A673 (cell line): ENCODE measurements at regions of chr20 and their contacts with region 1.

Region 1: GRCh38 chr20:32050851-32051556 is 1.0 kb upstream of the HCK start:
- DNase-seq: no peak
- H3K4me3 ChIP-seq: no peak overlapping the region
- H3K27ac ChIP-seq: no peak overlapping the region
- H3K4me1 ChIP-seq: peaks cover 4% of the 10 kb centered on the region
- H3K27me3 ChIP-seq: peaks cover 51% of the 10 kb centered on the region
- CTCF ChIP-seq: no peak

Region 2: DNA sequence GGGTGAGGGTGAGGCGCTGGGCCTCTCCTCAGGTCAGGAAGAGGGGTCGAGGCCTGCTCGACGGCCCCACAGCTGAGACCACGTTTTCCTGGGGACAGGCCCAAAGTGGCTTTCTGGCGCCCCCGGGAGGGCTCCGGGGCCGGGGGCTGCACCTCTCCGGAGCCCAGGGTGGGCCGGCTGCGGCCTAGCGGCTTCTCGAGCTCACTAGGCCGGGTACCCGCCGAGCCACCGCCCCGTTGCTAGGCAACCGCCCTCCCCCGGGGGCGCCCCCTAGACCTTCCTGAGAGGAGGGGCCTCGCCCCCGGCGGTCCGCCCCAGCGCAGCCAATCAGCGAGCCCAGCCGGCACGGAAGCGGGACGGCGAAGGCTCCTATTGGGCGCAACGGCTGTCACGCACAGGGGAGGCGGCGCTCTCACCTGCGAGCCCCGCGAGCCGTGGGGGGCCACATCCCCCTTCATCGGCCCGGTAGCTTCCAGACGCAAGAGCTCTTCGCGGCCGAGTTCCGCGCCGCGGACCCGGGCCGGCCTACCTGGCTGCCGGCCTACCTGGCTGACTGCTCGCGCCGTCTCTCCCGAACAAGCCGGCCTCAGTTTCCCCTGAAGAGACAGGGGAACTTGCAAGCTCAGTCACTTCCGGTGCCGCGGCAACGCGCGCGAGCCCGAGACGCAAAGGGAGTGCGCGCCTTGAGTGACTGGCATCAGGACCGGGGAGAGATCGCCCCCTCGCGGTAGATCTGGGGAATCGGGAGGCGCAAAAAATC is 327.5 kb before region 1 on chr20:
- CTCF ChIA-PET with region 1: no interaction called
- POLR2A ChIA-PET with region 1: no interaction called
- intact Hi-C with region 1: no loop called
- DNase-seq: peak; percentile 99
- H3K4me3 ChIP-seq: peak overlapping the region; percentile 66
- H3K27ac ChIP-seq: peak overlapping the region; percentile 89
- H3K4me1 ChIP-seq: peaks cover 31% of the 10 kb centered on the region
- H3K27me3 ChIP-seq: no peaks in the 10 kb centered on the region
- CTCF ChIP-seq: peak; percentile 95

Region 3: DNA sequence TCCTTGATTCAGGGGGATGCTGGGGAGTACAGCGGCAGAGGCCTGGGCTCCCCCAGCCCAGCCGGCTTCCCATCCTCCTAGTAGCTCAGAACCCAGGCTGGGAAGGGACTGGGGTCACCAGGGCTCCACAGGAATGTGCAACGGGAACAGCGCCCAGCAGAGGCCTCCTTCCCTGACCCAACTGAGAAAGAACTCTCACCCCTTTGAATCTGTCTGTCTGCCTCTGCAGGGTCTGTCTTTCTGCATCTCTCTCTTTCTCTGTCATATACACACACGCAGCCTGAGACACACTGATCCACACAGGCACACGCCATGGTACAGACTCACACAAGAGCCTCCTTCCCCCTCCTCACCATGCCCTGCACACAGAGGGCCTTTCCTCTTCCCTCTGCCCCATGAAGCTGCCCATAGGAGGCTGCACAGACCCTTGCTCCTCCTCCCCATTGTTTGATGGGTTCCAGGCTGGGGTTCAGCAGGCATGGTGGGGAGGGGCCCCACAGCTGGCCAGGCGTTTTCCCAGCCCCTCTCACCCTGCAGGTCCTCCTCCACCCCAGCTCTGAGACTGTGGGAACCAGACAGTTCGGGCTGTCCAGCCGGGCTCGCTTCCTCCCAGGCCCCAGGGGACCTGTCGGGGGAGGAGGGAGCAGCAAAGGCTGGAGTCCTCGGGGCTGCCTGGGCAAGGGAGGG is 208.4 kb before region 1 on chr20:
- CTCF ChIA-PET with region 1: no interaction called
- POLR2A ChIA-PET with region 1: no interaction called
- intact Hi-C with region 1: no loop called
- DNase-seq: no peak
- H3K4me3 ChIP-seq: no peak overlapping the region
- H3K27ac ChIP-seq: no peak overlapping the region
- H3K4me1 ChIP-seq: no peaks in the 10 kb centered on the region
- H3K27me3 ChIP-seq: peaks cover 1% of the 10 kb centered on the region
- CTCF ChIP-seq: no peak

Region 4: DNA sequence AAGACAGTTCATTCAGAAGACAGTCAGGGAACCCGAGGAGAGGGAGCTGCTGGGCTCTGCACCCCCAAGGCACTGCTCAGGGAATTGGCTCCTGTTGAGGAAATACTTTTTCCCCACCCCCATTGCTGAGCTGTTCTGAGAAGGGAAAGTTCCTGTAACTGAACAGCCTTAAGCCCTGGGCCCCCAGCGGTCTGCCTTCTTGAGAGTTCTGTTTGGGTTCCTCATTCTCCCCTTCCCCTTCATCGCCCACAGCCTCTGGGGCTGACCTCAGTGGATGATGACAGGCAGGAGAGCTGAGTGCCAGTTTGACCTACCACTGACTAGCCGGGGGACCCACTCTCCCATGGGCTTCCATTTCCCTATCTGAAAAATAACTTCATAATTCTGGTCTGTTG is 11.8 kb after region 1 on chr20:
- CTCF ChIA-PET with region 1: no interaction called
- POLR2A ChIA-PET with region 1: interaction called, 11 read pairs
- intact Hi-C with region 1: no loop called
- DNase-seq: no peak
- H3K4me3 ChIP-seq: no peak overlapping the region
- H3K27ac ChIP-seq: no peak overlapping the region
- H3K4me1 ChIP-seq: no peaks in the 10 kb centered on the region
- H3K27me3 ChIP-seq: peaks cover 36% of the 10 kb centered on the region
- CTCF ChIP-seq: no peak

Region 5: DNA sequence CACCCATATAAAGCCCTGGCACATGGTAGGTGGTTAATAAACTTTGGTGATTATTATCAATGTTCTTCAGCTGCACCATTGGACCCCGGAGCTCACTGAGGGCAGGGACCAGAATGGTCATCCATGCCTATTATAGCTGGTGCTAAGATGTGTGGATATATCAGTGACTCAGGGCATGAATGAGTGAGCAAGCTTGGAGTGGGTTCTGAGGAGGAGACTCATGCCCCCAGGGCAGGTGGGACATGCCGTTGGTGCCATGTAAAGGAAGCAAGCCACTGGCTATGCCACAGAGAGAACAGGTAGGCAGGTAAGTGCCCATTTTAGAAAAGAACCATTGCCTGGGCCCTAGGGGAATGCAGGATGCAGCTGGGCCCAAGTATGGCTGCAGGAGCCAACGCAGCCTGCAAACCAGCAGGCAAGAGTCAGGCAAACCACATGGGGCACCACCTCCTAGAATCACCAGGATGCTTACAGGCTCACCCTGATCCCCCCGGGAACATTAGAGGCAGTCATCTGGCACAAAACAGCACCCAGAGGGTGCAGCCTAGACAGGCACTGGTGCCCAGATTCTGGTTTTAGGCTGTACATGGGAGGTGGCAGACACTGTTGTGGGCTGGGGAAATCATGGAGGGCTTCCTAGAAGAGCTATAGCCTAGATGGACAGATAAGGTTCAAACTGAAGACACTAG is 133.1 kb after region 1 on chr20:
- CTCF ChIA-PET with region 1: no interaction called
- POLR2A ChIA-PET with region 1: no interaction called
- intact Hi-C with region 1: no loop called
- DNase-seq: no peak
- H3K4me3 ChIP-seq: no peak overlapping the region
- H3K27ac ChIP-seq: no peak overlapping the region
- H3K4me1 ChIP-seq: peaks cover under 1% of the 10 kb centered on the region
- H3K27me3 ChIP-seq: no peaks in the 10 kb centered on the region
- CTCF ChIP-seq: no peak